CD8-positive, alpha-beta memory T cell (primary cell): ENCODE measurements at regions of chr7 and their contacts with region 1.

Region 1: GRCh38 chr7:140397784-140398750 is at the start of gene SLC37A3:
- DNase-seq: peak; percentile 78 to 88 (median 83)
- H3K4me3 ChIP-seq: peak within 1 kb of the TSS; percentile 71
- H3K4me3 Mint-ChIP-seq: peak within 1 kb of the TSS; percentile 88 to 96 (median 93)
- H3K27ac ChIP-seq: peak within 1 kb of the TSS; percentile 68
- H3K27ac Mint-ChIP-seq: peak within 1 kb of the TSS; percentile 49 to 98 (median 90)
- H3K4me1 ChIP-seq: peaks cover 7% of the 10 kb centered on the region
- H3K4me1 Mint-ChIP-seq: peaks cover 14 to 30% (median 24%) of the 10 kb centered on the region in 3 donors
- H3K27me3 ChIP-seq: no peaks in the 10 kb centered on the region
- H3K27me3 Mint-ChIP-seq: no peaks in the 10 kb centered on the region
- total RNA-seq, gene SLC37A3: 56.6 to 57.2 TPM

Region 2: GRCh38 chr7:140144821-140145220 is 253.2 kb before region 1 on chr7:
- CTCF ChIA-PET with region 1: no interaction called
- POLR2A ChIA-PET with region 1: no interaction called
- DNase-seq: no peak
- H3K4me3 ChIP-seq: no peak overlapping the region
- H3K4me3 Mint-ChIP-seq: no peak overlapping the region
- H3K27ac ChIP-seq: no peak overlapping the region
- H3K27ac Mint-ChIP-seq: peak overlapping the region in 1 of 8 donors; percentile 45
- H3K4me1 ChIP-seq: peaks cover 6% of the 10 kb centered on the region
- H3K4me1 Mint-ChIP-seq: peaks cover 54 to 83% (median 80%) of the 10 kb centered on the region in 3 donors
- H3K27me3 ChIP-seq: no peaks in the 10 kb centered on the region
- H3K27me3 Mint-ChIP-seq: no peaks in the 10 kb centered on the region

Region 3: DNA sequence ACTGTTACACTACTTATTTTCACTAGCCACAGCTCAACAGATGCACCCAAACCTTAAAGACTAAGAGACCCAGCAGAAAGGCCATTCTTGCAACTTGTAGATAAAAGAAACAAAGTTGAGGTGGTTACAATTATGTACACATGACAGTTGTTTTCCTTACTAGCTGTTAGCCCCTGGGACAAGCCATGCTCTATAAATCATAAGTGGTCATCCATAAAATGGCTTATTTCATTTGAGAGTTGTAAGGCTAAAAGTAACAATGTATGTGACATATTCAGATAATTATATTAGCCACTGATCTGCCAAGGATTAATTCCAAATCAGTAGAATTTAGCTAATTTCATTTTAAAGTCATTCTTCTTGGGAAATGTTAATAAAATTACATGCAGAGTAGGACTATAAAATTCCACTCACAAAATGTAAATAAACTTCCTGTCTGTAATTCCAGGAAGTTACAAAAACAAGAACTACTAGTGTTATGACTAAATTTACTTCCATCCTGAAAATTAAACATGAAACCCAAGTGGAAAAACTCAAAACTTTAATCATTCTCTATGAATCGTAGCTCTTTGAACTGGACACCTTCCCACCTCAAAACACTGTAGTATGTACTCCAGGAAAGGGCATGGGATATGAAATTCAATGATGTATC is 13.0 kb before region 1 on chr7:
- CTCF ChIA-PET with region 1: interaction called, 3 read pairs
- POLR2A ChIA-PET with region 1: interaction called, 15 read pairs
- DNase-seq: no peak
- H3K4me3 ChIP-seq: no peak overlapping the region
- H3K4me3 Mint-ChIP-seq: no peak overlapping the region
- H3K27ac ChIP-seq: no peak overlapping the region
- H3K27ac Mint-ChIP-seq: peak overlapping the region in 2 of 8 donors; percentile 24 to 61
- H3K4me1 ChIP-seq: peaks cover 2% of the 10 kb centered on the region
- H3K4me1 Mint-ChIP-seq: peaks cover 5 to 18% (median 10%) of the 10 kb centered on the region in 3 donors
- H3K27me3 ChIP-seq: no peaks in the 10 kb centered on the region
- H3K27me3 Mint-ChIP-seq: no peaks in the 10 kb centered on the region